Breast epithelium (tissue), 4 donors: ENCODE measurements at regions of chr5 and their contacts with region 1.

Region 1: GRCh38 chr5:3999929-4000328 is 404.3 kb downstream of the IRX1 start:
- DNase-seq: no peak
- H3K4me3 ChIP-seq: no peak overlapping the region
- H3K27ac ChIP-seq: no peak overlapping the region
- H3K4me1 ChIP-seq: no peaks in the 10 kb centered on the region
- H3K27me3 ChIP-seq: no peaks in the 10 kb centered on the region
- CTCF ChIP-seq: no peak
- POLR2A ChIP-seq: no peak

Region 2: DNA sequence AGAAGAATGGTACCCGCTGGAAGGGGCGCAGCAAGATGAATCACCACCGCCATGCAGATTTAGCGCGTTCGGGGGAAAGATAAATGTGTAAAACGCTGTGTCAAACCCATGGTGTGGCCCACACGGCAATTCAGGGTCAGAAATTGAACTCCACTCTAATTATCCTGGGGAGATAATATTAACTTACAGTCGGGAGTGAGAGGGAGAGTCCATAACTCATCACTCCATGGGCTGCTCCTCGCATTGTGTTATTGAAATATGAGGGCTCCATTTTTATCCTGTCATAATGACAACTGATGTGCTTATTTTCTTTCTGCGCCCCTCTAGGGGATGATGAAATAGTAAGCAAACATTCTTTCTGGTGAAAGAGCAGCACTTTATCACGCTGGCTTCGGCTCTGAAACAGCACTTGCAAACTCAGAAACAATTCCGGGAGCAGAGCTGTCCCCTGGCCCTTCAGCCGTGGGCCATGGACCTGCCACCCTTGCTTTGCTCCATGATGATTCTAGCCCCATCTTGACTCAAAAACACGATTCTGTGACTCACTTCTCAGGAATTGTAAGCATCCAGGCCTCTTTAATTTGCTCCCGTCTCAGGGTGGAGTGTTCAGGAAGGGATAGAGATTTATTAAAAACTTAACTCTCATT is 27.3 kb after region 1 on chr5:
- intact Hi-C with region 1: loop called (anchors 1 kb)
- DNase-seq: no peak
- H3K4me3 ChIP-seq: no peak overlapping the region
- H3K27ac ChIP-seq: no peak overlapping the region
- H3K4me1 ChIP-seq: no peaks in the 10 kb centered on the region
- H3K27me3 ChIP-seq: no peaks in the 10 kb centered on the region
- CTCF ChIP-seq: no peak
- POLR2A ChIP-seq: no peak

Region 3: DNA sequence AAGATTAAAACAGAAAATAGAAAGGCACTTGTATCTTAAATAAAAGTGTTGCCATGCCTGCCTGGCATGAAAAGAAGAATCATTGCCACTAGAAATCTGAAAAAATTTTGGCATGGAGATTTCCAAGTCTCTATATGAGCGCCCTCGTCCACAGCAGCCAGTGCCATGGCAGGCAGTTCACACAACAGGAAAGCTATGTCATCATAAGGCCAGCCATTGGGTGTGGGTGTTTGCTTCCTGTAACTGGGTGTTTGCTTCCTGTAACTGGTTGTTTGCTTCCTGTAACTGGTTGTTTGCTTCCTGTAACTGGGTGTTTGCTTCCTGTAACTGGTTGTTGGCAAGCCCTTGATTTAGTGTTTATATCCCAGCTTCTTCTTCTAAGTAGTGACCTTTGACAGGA is 42.4 kb after region 1 on chr5:
- intact Hi-C with region 1: no loop called
- DNase-seq: no peak
- H3K4me3 ChIP-seq: no peak overlapping the region
- H3K27ac ChIP-seq: no peak overlapping the region
- H3K4me1 ChIP-seq: no peaks in the 10 kb centered on the region
- H3K27me3 ChIP-seq: no peaks in the 10 kb centered on the region
- CTCF ChIP-seq: no peak
- POLR2A ChIP-seq: no peak

Region 4: GRCh38 chr5:4058899-4059298 is 59.0 kb after region 1 on chr5:
- intact Hi-C with region 1: no loop called
- DNase-seq: no peak
- H3K4me3 ChIP-seq: no peak overlapping the region
- H3K27ac ChIP-seq: no peak overlapping the region
- H3K4me1 ChIP-seq: no peaks in the 10 kb centered on the region
- H3K27me3 ChIP-seq: no peaks in the 10 kb centered on the region
- CTCF ChIP-seq: no peak
- POLR2A ChIP-seq: no peak